IMR-90 (cell line): ENCODE measurements at regions of chr5 and their contacts with region 1.

Region 1: DNA sequence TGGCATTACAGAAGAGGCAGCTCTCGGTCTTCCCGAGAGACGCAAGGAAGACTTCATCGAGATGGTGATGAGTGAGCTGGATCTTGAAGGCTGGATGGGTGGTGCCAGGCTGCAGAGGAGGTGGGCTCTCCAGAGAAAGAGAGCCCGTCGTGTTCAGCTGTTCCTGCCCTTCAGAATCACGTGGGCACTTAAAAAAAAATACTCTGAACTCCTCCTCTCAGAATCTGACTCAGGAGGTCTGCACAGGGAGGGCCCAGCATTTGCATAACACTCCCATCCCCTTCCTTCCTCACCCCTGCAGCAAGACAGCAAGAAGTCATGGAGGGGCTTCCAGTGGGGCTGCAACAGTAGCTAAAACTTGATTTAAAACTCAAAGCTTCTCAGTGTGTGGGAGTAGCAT is 203.0 kb downstream of the ATPSCKMT start:
- DNase-seq: no peak
- ATAC-seq: no peak
- H3K4me3 ChIP-seq: no peak overlapping the region
- H3K27ac ChIP-seq: no peak overlapping the region
- H3K4me1 ChIP-seq: peaks cover 4% of the 10 kb centered on the region
- H3K27me3 ChIP-seq: peaks cover 11% of the 10 kb centered on the region
- CTCF ChIP-seq: no peak
- POLR2A ChIP-seq: no peak
- RAD21 ChIP-seq: no peak

Region 2: DNA sequence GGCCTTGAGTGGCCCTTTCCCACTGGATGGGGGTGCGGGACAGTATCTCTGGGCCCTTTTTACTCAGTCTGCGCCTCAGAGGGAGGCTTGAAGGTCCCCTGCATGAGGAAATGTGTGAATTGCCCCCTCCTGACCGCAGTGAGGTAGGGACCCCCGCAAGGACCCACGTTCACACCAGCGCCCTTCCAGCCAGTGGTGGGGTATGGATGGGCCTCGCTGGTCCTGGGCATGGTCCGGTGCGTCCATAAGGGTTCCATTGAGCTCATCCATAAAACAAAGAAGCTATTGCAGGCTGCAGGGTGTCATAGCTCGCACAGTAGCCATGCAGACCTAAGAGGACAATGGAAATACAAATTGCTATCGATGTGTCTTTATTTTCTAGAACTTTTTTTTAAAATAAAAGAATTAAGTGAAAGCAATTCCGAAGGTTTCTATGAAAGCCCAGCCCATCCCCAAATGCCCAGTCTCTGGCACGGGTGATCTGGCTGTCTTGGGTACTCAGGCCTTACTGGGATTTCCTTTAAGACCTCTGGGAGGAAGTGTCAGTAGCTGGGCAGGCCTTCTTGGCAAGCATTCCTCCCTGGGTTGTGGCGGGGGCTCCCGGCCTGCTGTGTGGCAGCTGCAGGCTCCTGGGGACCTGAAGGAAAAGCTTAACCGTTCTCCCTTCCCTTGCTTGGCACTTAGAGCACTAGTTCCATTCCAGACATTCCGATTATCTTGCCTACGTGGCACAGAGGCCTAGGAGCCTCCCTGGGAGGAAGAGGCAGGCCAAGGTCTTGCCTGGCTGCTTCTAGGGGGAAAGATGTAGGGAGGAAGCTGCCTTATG is 499.3 kb before region 1 on chr5:
- CTCF ChIA-PET with region 1: no interaction called
- POLR2A ChIA-PET with region 1: no interaction called
- dilution Hi-C with region 1: no loop called
- in situ Hi-C with region 1: no loop called
- intact Hi-C with region 1: no loop called
- DNase-seq: peak; percentile 62
- ATAC-seq: peak; percentile 1; the same call in 1 of the 2 replicates
- H3K4me3 ChIP-seq: peak overlapping the region; percentile 94
- H3K27ac ChIP-seq: peak overlapping the region; percentile 79
- H3K4me1 ChIP-seq: peaks cover 2% of the 10 kb centered on the region; the same call in 1 of the 2 replicates
- H3K27me3 ChIP-seq: no peaks in the 10 kb centered on the region
- CTCF ChIP-seq: no peak
- POLR2A ChIP-seq: peak; percentile 60; the same call in 1 of the 2 replicates
- RAD21 ChIP-seq: no peak

Region 3: DNA sequence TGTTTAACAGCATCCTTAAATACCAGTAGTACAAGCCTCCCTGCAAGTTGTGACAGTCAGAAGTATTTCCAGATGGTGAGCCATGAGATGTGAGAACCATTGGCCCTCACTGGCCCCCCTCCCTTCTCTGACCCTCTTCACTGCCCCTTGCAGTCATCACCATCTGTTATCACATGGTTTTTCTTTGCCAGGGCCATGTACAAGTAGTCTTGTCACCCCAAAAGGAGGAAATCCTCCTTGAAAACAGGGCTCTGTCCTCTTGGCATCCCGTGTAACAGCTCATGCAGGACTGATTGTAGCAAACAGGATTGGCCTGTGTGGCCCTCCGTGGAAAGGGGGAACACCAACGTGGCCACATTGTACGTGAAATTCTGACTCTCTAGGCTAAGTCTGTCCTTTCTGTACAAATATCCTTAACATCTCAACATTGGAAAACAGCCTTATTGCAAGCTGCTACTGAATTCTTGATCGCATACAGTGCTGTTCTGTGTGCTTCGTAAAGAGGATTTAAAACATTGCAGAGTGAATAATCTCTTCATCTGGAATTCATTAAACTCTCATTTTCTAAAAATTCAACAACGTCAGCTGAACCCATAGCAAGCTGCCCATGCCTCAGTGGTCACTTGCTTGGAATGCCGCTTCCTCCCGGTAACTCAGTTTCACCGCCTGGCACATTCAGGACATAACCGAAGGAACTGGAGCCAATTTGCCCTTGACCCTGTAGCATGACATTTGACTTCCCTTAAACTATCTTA is 31.3 kb after region 1 on chr5:
- CTCF ChIA-PET with region 1: no interaction called
- POLR2A ChIA-PET with region 1: interaction called, 21 read pairs
- dilution Hi-C with region 1: no loop called
- in situ Hi-C with region 1: no loop called
- intact Hi-C with region 1: no loop called
- DNase-seq: peak; percentile 35
- ATAC-seq: peak; percentile 17
- H3K4me3 ChIP-seq: no peak overlapping the region
- H3K27ac ChIP-seq: no peak overlapping the region
- H3K4me1 ChIP-seq: no peaks in the 10 kb centered on the region
- H3K27me3 ChIP-seq: peaks cover 19% of the 10 kb centered on the region
- CTCF ChIP-seq: no peak
- POLR2A ChIP-seq: no peak
- RAD21 ChIP-seq: no peak